ENCODE measurements at regions of chr12 and their contacts with region 1.

Region 1: DNA sequence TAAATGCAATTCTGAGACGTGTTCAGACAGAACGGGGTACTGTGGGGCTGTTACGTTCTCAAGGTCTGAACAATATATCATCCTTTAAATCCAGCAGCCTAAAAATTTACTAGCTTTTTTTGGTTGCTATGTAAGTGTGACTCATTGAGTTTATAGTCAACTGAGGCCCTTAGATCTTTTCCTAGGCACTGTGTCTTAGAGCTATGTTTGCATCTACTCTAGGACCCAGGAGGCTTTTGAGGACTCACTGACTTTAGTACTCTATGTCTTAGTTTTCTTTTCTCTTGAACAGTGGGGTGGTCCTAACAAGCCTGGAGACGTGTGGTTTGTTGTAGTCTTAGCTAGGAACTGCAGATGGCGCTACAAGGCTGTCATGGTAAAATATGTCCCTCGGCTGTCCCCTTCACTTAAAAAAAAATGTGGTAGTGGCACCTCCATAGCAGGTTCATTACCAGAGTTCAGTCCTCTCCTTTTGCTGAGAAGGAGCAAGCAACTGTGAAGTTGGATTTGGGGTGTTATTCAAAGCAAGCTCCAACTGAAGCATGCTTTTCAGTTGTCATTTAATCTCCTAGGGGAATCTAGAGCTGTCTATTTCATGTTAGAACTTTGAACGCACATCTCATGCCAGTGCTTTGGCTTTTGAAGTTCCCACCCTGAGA is 8.7 kb upstream of the SPATS2 start:
- H3K4me3 ChIP-seq: no peak overlapping the region
- H3K27ac ChIP-seq: no peak overlapping the region
- H3K4me1 ChIP-seq: no peaks in the 10 kb centered on the region
- CTCF ChIP-seq: peak; percentile 78

Region 2: GRCh38 chr12:49322708-49323523 is 35.7 kb before region 1 on chr12 and contains the start of gene TROAP:
- CTCF ChIA-PET with region 1: interaction called, 18 read pairs
- POLR2A ChIA-PET with region 1: no interaction called
- H3K4me3 ChIP-seq: peak within 1 kb of the TSS; percentile 73
- H3K27ac ChIP-seq: peak within 1 kb of the TSS; percentile 46
- H3K4me1 ChIP-seq: 0 out of 2 replicates have a peak, but pooled peaks cover 4% of the 10 kb centered on the region
- CTCF ChIP-seq: no peak

Region 3: DNA sequence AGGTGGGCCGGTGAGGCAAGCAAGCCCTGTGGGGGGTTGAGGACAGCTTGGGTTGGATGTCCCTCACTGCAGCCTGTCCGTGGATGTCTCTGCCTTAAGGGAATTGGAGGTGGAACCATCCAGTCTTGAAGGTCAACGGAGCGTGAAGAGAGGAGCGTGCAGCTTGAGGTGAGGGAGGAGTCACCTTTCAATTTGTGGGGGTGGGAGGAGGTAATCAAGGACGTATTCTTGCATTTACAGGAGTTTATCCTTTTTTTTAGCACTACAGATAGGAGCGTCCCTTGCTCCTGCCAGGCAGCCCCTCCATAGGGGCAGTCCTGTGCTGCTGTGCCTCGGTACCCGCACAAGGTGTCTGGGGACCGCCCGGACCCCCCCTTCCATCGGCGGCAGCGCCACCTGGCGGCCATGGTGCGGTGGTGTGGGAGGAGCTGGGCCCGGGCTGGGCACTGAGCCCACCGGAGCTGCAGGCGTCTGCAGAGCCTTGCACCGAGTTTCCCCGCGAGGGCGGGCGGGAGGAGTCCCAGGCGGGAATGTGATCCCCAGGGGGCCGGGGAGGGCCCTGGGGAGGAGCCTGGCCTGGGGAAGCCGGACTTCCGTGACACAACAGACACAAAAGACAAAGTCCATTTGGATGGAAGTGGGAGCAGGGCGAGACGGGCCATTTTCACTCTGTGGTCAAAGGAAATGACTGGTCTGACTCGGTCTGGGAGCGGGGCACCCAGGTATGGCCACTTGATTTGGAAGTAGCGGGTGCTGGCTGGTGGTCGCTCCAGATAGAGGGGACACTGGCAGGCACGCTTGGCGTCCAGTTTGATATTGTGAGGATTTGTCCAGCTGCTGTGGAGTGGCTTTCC is 11.0 kb before region 1 on chr12:
- CTCF ChIA-PET with region 1: interaction called, 96 read pairs
- POLR2A ChIA-PET with region 1: interaction called, 6 read pairs
- H3K4me3 ChIP-seq: peak overlapping the region; percentile 32
- H3K27ac ChIP-seq: peak overlapping the region; percentile 80; the same call in 1 of the 2 replicates
- H3K4me1 ChIP-seq: peaks cover 21% of the 10 kb centered on the region
- CTCF ChIP-seq: peak; percentile 97

Region 4: GRCh38 chr12:49439042-49439441 is 80.4 kb after region 1 on chr12:
- CTCF ChIA-PET with region 1: no interaction called
- POLR2A ChIA-PET with region 1: no interaction called
- H3K4me3 ChIP-seq: no peak overlapping the region
- H3K27ac ChIP-seq: no peak overlapping the region
- H3K4me1 ChIP-seq: 0 out of 2 replicates have a peak, but pooled peaks cover 3% of the 10 kb centered on the region
- CTCF ChIP-seq: no peak

Region 5: DNA sequence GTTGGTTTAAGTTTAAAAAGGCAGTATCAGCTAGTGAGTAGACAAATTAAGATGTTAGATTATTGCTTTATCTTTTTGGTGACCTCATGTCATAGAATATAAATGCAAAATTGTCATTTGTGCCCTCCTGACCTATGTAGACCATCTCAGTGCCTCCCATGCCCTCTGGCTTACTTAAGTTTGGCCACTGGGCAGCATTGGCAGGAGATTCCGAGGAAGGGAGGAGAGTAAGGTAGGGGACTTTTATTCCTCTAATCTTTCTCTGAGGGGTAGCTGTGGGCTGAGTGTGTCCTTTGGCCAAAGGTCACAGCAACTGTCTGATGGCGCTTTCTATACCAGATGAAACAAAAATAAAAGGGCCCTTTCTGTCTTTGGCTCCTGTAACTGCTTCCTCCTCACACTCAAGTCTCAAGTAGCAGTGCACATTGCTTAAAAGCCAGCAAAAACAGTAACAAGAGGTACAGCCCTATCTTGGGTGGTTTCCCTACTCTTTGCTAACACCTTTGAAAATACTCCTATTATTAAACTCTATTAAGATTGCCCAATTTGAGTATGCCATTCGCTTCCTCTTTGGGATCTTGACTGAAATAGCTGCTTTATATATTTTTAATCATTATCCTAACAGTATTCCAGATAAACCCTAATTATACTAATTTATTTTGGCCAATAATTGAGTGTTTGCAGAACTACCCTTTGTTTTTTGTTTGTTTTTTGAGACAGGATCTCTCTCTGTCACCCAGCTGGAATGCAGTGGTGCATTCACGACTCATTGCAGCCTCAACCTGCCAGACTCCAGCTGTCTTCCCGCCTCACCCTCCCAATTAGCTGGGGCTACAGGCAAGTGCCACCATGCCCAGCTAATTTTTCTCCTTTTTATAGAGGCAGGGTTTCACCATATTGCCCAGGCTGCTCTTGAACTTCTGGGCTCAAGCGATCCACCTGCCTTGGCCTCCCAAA is 123.8 kb after region 1 on chr12:
- CTCF ChIA-PET with region 1: interaction called, 15 read pairs
- POLR2A ChIA-PET with region 1: no interaction called
- H3K4me3 ChIP-seq: no peak overlapping the region
- H3K27ac ChIP-seq: no peak overlapping the region
- H3K4me1 ChIP-seq: peaks cover 4% of the 10 kb centered on the region; the same call in 1 of the 2 replicates
- CTCF ChIP-seq: no peak

Region 6: DNA sequence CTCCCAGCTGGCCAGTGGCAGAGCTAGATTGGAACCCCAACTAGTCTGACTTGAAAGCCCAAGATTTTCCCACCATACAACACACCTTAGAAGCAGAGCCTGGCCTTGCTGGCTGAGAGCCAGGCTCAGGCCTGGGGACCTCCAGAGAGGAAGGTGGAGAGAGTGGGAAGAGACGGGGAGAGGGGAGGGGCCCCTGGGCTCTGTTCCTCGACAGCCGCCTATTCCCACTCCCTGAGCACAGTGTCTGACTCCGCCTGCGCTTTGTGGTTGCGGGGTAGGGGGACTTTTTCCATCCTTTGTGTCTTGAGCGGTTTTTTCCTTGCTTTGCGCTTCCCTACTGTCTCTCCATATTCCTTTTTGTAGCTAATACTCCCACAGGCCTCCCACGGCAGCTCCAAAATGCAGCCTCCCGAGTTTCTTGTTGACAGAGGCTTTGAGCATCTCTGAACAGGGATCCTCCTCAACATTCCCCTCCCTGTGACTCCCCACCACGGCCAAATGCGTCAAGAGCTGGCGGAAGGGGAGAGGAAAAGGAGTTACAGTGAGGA is 176.2 kb after region 1 on chr12:
- CTCF ChIA-PET with region 1: interaction called, 19 read pairs
- POLR2A ChIA-PET with region 1: no interaction called
- H3K4me3 ChIP-seq: no peak overlapping the region
- H3K27ac ChIP-seq: no peak overlapping the region
- H3K4me1 ChIP-seq: peaks cover 2% of the 10 kb centered on the region; the same call in 1 of the 2 replicates
- CTCF ChIP-seq: no peak

Region 7: DNA sequence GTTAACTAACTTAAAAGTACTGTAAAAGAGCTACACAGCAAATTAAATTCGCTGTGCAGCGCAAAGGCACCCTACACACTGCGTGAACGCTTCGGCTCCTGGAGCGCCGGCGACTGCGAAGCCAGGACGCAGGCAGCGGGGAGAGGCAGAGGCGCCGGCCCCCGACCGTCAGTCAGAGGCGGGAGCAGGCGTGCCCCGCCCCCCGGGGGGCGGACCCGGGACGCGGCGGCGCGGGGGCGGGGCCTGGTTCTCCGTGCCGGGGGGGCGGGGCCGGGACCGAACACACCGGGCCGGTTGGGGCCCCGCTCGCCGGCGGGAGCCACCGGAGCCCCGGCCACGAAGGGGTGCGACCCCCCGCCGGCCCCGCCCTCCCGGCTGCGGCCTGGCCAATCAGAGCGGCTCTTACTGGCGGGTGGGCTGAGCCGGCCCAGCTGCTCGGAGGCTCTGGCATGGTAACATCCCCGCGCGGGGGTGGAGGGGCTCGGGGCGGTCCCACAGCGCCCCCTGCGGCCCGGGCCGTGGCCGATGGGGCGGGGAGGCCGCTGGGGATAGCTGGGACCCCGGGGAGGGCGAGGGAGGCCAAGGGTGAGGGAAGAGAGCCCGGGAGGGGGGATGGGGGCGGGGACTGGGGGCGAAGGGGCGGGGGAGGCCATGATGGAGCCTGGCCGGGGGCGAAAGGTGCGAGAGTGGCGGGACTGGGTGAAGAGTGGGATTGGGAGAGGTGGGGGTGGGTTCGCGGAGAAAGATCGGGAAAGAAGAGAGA is 264.7 kb after region 1 on chr12 and contains the start of gene PRPF40B:
- CTCF ChIA-PET with region 1: interaction called, 11 read pairs
- POLR2A ChIA-PET with region 1: no interaction called
- H3K4me3 ChIP-seq: peak within 1 kb of the TSS; percentile 49
- H3K27ac ChIP-seq: peak within 1 kb of the TSS; percentile 1
- H3K4me1 ChIP-seq: no peaks in the 10 kb centered on the region
- CTCF ChIP-seq: peak; percentile 22; the same call in 1 of the 2 replicates

Region 8: DNA sequence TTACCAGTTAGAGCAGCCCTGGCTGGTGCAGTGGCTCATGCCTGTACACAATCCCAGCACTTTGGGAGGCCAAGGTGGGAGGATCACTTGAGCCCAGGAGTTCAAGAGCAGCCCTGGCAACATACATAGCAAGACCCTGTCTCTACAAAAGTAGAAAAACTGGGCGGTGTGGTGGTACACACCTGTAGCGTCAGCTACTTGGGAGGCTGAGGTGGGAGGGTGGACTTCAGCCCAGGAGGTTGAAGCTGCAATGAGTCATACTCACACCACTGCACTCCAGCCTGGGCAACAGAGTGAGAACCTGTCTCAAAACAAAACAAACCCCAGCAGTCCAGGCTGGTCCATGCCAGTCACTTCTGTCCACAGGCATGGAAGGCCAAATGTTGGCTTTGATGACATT is 760.8 kb after region 1 on chr12:
- CTCF ChIA-PET with region 1: no interaction called
- POLR2A ChIA-PET with region 1: no interaction called
- H3K4me3 ChIP-seq: no peak overlapping the region
- H3K27ac ChIP-seq: no peak overlapping the region
- H3K4me1 ChIP-seq: 0 out of 2 replicates have a peak, but pooled peaks cover 2% of the 10 kb centered on the region
- CTCF ChIP-seq: no peak